T-cell (primary cell): ENCODE measurements at regions of chr1 and their contacts with region 1.

Region 1: DNA sequence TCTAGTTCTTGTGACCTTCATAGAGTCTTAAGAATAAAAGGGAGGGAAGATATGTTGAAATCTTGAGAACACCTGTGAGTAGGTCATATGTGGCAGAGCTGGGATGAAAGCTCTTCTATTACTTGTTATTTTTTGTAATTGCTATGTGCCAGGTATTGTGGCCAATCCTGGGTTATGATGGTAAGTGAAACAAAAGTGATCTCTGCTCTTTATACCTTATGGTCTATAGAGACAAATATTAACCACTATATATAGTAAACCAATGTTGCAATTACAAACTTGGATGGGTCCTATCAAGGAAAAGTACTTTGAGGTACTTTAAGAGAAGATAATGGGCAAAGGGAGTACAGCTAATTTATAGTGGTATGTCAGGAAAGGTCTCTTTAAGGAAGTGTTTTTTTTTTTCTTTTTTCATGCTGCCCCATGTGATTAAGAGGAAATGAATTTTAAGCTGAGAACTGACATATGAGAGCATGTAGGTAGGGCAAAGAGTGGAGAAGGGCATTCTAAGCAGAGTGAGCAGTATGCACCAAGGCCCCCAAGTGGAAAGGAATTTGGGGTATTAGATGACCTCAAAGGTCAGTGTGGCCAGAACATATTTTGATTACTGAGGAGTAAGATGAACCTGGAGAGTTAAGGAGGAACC is 43.3 kb downstream of the POU2F1 start:
- DNase-seq: peak in 1 of 35 experiments; percentile 25
- ATAC-seq: peak in 3 of 4 experiments; percentile 31 to 60 (median 59)
- H3K4me3 ChIP-seq: no peak overlapping the region
- H3K4me3 Mint-ChIP-seq: no peak overlapping the region
- H3K27ac ChIP-seq: peak overlapping the region; percentile 10
- H3K27ac Mint-ChIP-seq: no peak overlapping the region
- H3K4me1 ChIP-seq: peaks cover 9 to 27% of the 10 kb centered on the region in 2 experiments
- H3K4me1 Mint-ChIP-seq: peaks cover 17 to 31% (median 20%) of the 10 kb centered on the region in 3 donors
- H3K27me3 ChIP-seq: no peaks in the 10 kb centered on the region
- H3K27me3 Mint-ChIP-seq: no peaks in the 10 kb centered on the region

Region 2: DNA sequence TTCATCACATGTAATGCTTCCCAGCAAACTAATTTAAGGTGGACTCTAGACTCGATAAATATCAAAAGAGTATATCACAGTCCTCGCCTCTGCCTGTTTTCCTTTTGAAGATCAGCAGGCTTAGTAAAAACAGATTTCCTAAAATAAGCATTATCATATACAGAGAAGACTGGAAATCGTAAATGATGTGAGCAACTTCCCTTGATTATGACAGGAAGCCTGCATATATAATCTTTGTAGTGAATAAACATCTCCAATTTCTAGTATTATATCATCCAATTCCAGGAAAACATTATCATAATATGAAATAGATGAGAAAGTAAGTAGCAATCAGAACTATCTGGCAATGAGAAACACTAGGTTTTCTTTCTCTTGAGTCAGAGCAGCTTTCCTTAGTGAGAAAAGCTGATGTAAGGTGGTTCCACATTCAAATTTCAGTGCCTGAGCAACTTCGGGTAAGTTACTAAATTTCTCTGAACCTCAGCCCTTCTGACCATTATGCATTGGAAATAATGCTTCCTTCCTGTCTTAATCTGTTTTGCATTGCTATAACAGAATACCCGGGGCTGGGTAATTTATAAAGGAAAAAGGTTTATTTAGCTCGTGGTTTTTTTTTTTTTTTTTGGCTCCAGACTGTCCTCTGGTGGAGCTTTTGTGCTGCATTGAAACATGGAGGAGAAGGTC is 55.9 kb before region 1 on chr1:
- CTCF ChIA-PET with region 1: no interaction called
- POLR2A ChIA-PET with region 1: no interaction called
- DNase-seq: no peak
- ATAC-seq: no peak
- H3K4me3 ChIP-seq: no peak overlapping the region
- H3K4me3 Mint-ChIP-seq: no peak overlapping the region
- H3K27ac ChIP-seq: no peak overlapping the region
- H3K27ac Mint-ChIP-seq: no peak overlapping the region
- H3K4me1 ChIP-seq: peaks cover 0 to 3% of the 10 kb centered on the region in 2 experiments
- H3K4me1 Mint-ChIP-seq: peaks cover 0 to 2% (median 0%) of the 10 kb centered on the region in 3 donors
- H3K27me3 ChIP-seq: no peaks in the 10 kb centered on the region
- H3K27me3 Mint-ChIP-seq: no peaks in the 10 kb centered on the region

Region 3: DNA sequence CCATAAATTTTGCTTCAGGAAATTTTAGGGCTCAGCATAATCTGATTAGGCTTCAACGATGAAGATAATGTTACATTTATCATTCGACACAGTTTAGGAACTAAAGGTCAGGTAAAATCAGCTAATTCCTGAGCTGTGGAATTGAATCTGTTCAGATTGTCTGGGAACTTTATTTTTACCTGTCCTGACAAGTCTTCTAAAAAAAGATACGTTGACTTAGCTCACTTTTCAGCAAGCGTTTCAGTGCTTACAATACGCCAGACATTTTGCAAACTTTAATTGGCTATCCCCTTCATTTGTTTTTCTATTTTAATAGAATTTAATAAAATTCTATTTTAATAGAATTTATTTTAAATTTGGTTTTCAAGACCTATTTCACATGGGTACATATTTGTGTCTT is 14.6 kb after region 1 on chr1:
- CTCF ChIA-PET with region 1: interaction called, 5 to 10 read pairs
- POLR2A ChIA-PET with region 1: interaction called in 1 of 2 experiments, 3 read pairs
- DNase-seq: no peak
- ATAC-seq: no peak
- H3K4me3 ChIP-seq: no peak overlapping the region
- H3K4me3 Mint-ChIP-seq: no peak overlapping the region
- H3K27ac ChIP-seq: no peak overlapping the region
- H3K27ac Mint-ChIP-seq: no peak overlapping the region
- H3K4me1 ChIP-seq: no peaks in the 10 kb centered on the region
- H3K4me1 Mint-ChIP-seq: peaks cover 25 to 47% (median 40%) of the 10 kb centered on the region in 3 donors
- H3K27me3 ChIP-seq: no peaks in the 10 kb centered on the region
- H3K27me3 Mint-ChIP-seq: no peaks in the 10 kb centered on the region

Region 4: DNA sequence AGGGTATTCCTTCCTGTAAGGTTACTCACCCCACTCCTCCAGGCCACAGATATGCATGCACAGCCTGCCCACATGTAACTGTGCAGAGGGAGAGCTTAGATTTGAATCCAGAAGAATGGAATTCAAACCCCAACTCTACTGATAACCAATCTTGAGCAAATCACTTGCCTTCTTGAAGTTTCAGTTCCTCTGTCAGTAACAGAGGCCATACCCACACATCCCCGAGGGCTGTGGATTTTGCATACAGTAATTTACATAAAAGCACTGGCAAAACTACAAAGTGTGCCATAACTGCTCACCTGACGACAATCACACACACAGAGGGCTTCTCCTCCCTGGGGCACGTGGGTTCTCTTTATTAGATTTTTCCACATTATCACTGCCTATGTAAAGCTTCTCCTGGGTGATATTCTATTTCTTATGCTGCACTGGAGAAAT is 235.7 kb after region 1 on chr1:
- CTCF ChIA-PET with region 1: interaction called, 3 to 12 read pairs
- POLR2A ChIA-PET with region 1: interaction called, 3 read pairs
- DNase-seq: peak in 7 of 35 experiments; percentile 16 to 65 (median 40)
- ATAC-seq: peak; percentile 46 to 78 (median 53)
- H3K4me3 ChIP-seq: no peak overlapping the region
- H3K4me3 Mint-ChIP-seq: peak overlapping the region; percentile 7 to 98 (median 31)
- H3K27ac ChIP-seq: peak overlapping the region; percentile 66
- H3K27ac Mint-ChIP-seq: peak overlapping the region; percentile 81 to 97
- H3K4me1 ChIP-seq: peaks cover 87% of the 10 kb centered on the region in 2 experiments
- H3K4me1 Mint-ChIP-seq: peaks cover 99 to 100% (median 99%) of the 10 kb centered on the region in 3 donors
- H3K27me3 ChIP-seq: no peaks in the 10 kb centered on the region
- H3K27me3 Mint-ChIP-seq: no peaks in the 10 kb centered on the region

Region 5: DNA sequence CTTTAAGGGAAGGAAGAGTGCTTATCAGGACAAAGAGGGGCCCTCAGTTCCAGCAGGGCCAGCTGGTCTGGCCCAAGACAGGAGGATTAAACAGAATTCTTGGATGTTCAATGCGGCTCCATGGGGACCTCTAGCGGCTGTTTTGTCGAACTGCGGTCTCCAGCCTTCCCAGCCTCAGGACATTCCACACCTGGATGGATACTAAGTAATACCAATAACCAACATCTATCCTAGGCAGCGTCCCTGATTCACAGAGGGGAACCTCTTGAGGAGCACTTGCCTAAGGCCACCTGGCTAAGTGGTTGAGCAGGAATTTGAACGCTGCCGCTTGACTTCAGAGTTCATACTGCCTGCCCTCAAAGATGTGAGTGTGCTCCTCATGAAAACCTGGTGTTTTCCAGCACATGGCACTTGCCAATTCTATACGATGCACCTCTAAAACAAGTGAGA is 269.9 kb after region 1 on chr1:
- CTCF ChIA-PET with region 1: interaction called, 5 to 35 read pairs
- POLR2A ChIA-PET with region 1: no interaction called
- DNase-seq: peak in 32 of 35 experiments; percentile 24 to 82 (median 58)
- ATAC-seq: peak; percentile 79 to 81 (median 80)
- H3K4me3 ChIP-seq: no peak overlapping the region
- H3K4me3 Mint-ChIP-seq: no peak overlapping the region
- H3K27ac ChIP-seq: no peak overlapping the region
- H3K27ac Mint-ChIP-seq: no peak overlapping the region
- H3K4me1 ChIP-seq: peaks cover 0 to 5% of the 10 kb centered on the region in 2 experiments
- H3K4me1 Mint-ChIP-seq: peaks cover 0 to 4% (median 3%) of the 10 kb centered on the region in 3 donors
- H3K27me3 ChIP-seq: no peaks in the 10 kb centered on the region
- H3K27me3 Mint-ChIP-seq: no peaks in the 10 kb centered on the region

Region 6: DNA sequence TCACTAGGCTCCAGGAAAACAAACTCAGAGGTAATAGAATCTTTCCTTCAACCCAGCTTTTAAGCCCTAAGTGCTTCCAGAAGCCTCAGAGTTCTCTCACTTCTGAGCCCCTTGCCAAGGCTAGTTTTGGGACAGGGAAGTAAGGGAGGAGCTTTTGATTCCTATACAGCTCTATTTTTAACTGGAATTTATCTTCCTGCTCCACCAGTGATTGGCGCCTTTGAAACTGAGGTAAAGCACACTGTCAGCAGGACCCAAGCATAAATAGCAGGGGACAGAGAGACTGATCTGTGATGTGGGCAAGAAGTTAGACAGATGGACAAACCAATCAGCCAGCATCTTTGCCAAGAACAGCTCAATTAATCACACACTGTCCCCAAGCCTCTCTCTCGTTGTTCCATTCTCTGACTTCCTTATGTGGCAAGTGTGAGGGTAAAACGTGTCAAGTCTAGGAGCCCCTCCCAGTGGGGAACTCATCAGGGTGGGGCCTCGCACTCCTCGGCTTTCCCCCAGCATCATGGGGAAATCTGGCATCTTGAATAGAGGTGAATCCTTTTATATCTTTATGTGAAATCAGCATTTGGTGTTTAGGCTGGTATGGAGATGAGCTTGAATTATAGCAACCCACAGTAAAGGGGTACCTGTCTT is 417.6 kb after region 1 on chr1:
- CTCF ChIA-PET with region 1: no interaction called
- POLR2A ChIA-PET with region 1: interaction called in 1 of 2 experiments, 18 read pairs
- DNase-seq: no peak
- ATAC-seq: no peak
- H3K4me3 ChIP-seq: no peak overlapping the region
- H3K4me3 Mint-ChIP-seq: no peak overlapping the region
- H3K27ac ChIP-seq: peak overlapping the region; percentile 39
- H3K27ac Mint-ChIP-seq: peak overlapping the region; percentile 79 to 87
- H3K4me1 ChIP-seq: peaks cover 0 to 35% of the 10 kb centered on the region in 2 experiments
- H3K4me1 Mint-ChIP-seq: peaks cover 12 to 17% (median 14%) of the 10 kb centered on the region in 3 donors
- H3K27me3 ChIP-seq: no peaks in the 10 kb centered on the region
- H3K27me3 Mint-ChIP-seq: no peaks in the 10 kb centered on the region